PC-3 (cell line): ENCODE measurements at regions of chr12 and their contacts with region 1.

Region 1: DNA sequence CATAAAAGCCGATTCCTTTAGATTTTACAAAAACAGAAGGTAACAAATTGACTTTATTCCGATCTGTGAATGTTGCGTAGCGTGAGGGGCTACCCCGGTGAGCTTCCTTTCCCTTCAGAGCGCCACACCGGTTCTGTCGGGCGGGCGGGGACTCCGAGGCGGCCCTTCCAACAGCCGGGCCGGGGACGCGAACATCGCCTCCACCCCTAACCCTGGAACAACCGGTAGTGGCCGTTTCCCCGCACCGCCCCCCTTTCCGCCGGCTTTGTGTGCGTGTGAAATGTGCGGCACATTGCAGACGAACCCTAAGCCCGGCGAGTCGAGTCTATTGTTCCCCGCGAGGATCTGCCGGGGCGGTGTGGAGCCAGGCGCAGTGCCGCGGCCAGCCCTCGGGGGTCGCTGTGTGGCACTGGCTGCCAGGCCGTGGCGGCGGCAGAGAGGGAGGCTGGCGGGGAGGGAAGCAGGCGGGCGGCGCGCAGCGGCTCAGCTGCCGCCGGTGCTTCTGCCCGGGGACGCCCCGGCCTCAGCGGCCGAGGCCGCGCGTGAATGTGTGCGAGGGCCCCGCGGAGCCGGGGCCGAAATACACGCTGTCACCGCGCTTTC is 775 bp upstream of the ARID2 start:
- DNase-seq: peak; percentile 93
- ATAC-seq: peak; percentile 54
- H3K4me3 ChIP-seq: peak overlapping the region; percentile 87
- H3K27ac ChIP-seq: peak overlapping the region; percentile 82
- H3K4me1 ChIP-seq: peaks cover 34% of the 10 kb centered on the region
- H3K27me3 ChIP-seq: no peaks in the 10 kb centered on the region
- CTCF ChIP-seq: peak; percentile 80

Region 2: DNA sequence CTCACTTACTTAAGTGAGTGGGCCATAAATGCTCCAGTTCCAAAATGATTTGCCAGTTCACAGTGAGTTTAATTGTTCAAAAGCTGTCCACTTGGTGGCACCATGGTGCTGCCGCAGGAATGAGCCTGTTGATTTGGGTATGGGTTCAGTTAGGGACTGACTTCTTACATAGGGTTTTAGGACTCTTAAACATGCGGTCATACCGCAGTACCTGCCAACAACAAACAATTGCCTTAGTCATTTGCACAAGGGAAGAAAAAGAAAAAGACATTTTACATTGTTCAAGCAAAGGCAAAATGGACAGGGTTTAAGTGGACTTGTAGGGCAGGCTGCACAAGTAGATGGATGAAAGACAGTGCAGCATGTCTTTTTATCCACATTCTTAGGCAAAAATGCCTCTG is 597.9 kb before region 1 on chr12:
- CTCF ChIA-PET with region 1: no interaction called
- POLR2A ChIA-PET with region 1: no interaction called
- intact Hi-C with region 1: loop called (anchors 5 kb)
- DNase-seq: peak; percentile 86
- ATAC-seq: peak; percentile 78
- H3K4me3 ChIP-seq: no peak overlapping the region
- H3K27ac ChIP-seq: no peak overlapping the region
- H3K4me1 ChIP-seq: peaks cover 6% of the 10 kb centered on the region; the same call in 1 of the 2 replicates
- H3K27me3 ChIP-seq: 0 out of 2 replicates have a peak, but pooled peaks cover 4% of the 10 kb centered on the region
- CTCF ChIP-seq: peak; percentile 95

Region 3: GRCh38 chr12:45215419-45216229 is 513.1 kb before region 1 on chr12 and contains the start of gene ANO6:
- CTCF ChIA-PET with region 1: no interaction called
- POLR2A ChIA-PET with region 1: interaction called, 14 read pairs
- intact Hi-C with region 1: loop called (anchors 5 kb)
- DNase-seq: peak; percentile 90
- ATAC-seq: peak; percentile 75
- H3K4me3 ChIP-seq: peak within 1 kb of the TSS; percentile 94
- H3K27ac ChIP-seq: peak within 1 kb of the TSS; percentile 93
- H3K4me1 ChIP-seq: peaks cover 29% of the 10 kb centered on the region
- H3K27me3 ChIP-seq: no peaks in the 10 kb centered on the region
- CTCF ChIP-seq: peak; percentile 48
- total RNA-seq, gene ANO6: 18.1 and 23.0 TPM in 2 replicates

Region 4: DNA sequence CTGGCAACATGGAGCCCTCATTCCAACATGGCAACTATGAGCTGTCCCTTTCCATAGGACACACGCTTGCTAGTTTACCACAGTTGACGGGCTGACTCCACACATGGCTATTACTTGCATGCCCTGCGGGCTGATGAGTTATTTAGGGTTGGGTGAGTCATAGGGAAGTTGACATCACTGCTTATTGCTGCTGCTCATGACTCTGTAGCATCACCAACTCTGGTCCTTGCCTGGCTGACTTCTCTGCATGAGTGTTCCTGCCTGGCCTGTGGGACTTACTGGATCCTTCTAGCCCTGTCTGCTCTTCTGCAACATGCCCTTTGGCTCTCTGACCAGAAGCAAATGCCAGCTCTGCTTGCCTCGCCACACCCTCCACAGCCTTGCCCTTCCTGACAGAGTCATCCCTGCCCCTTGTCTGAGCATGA is 313.3 kb before region 1 on chr12:
- CTCF ChIA-PET with region 1: no interaction called
- POLR2A ChIA-PET with region 1: no interaction called
- intact Hi-C with region 1: loop called (anchors 2 kb)
- DNase-seq: peak; percentile 99
- ATAC-seq: peak; percentile 97
- H3K4me3 ChIP-seq: no peak overlapping the region
- H3K27ac ChIP-seq: peak overlapping the region; percentile 78
- H3K4me1 ChIP-seq: peaks cover 15% of the 10 kb centered on the region
- H3K27me3 ChIP-seq: no peaks in the 10 kb centered on the region
- CTCF ChIP-seq: no peak

Region 5: GRCh38 chr12:45483571-45483970 is 245.2 kb before region 1 on chr12:
- CTCF ChIA-PET with region 1: no interaction called
- POLR2A ChIA-PET with region 1: no interaction called
- intact Hi-C with region 1: no loop called
- DNase-seq: peak; percentile 4
- ATAC-seq: no peak
- H3K4me3 ChIP-seq: no peak overlapping the region
- H3K27ac ChIP-seq: no peak overlapping the region
- H3K4me1 ChIP-seq: no peaks in the 10 kb centered on the region
- H3K27me3 ChIP-seq: 0 out of 2 replicates have a peak, but pooled peaks cover 2% of the 10 kb centered on the region
- CTCF ChIP-seq: no peak

Region 6: GRCh38 chr12:45615268-45615667 is 113.5 kb before region 1 on chr12:
- CTCF ChIA-PET with region 1: no interaction called
- POLR2A ChIA-PET with region 1: no interaction called
- intact Hi-C with region 1: loop called (anchors 1 kb)
- DNase-seq: peak; percentile 95
- ATAC-seq: peak; percentile 99
- H3K4me3 ChIP-seq: no peak overlapping the region
- H3K27ac ChIP-seq: no peak overlapping the region
- H3K4me1 ChIP-seq: peaks cover 17% of the 10 kb centered on the region
- H3K27me3 ChIP-seq: no peaks in the 10 kb centered on the region
- CTCF ChIP-seq: no peak

Region 7: DNA sequence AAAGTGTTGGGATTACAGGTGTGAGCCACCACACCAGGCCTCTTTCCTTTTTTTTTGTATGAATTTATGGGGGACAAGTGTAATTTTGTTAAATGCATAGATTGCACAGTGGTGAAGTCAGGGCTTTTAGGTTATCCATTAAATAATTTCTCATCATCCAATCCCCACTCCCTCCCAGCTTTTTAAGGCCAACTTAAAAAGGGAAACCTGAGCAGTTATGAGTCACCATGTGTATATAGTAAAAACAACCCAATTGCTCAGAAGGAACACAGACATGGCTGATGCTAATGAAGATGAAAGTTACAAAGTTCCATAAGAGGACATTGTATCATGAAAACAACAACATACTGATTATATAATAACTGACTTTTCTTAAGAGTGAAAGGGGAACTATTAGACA is 24.8 kb before region 1 on chr12:
- CTCF ChIA-PET with region 1: interaction called, 3 read pairs
- POLR2A ChIA-PET with region 1: no interaction called
- intact Hi-C with region 1: loop called (anchors 2 kb)
- DNase-seq: peak; percentile 72
- ATAC-seq: peak; percentile 96
- H3K4me3 ChIP-seq: no peak overlapping the region
- H3K27ac ChIP-seq: no peak overlapping the region
- H3K4me1 ChIP-seq: peaks cover 5% of the 10 kb centered on the region
- H3K27me3 ChIP-seq: no peaks in the 10 kb centered on the region
- CTCF ChIP-seq: no peak